ENCODE measurements at regions of chr2 and their contacts with region 1.

Region 1: DNA sequence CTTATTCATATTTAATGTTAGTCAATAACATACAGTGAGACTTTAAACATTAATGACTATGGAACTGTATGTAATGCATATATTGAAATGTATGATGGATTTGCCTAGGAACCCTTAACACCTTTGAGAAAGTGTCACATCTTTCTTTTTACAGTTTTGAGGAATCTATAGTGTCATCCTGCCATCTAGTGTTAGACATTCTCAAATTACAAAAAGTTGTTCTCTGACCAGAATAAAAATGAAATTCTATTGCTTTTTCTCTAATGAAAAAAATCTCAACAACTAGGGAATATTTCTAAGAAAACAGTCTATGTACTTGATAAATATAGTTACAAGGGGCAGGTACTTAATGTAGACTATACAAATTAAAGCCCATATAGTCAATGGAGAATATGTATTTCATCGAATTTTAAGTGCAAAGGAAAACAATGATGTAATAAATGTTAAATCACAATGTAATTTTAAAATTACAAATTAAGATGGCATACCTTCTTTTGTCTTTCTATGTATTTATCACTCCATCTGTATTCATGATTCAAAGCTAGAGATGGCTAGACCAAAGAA is 5.1 kb upstream of the CALCRL start:
- DNase-seq: no peak
- ATAC-seq: no peak
- H3K4me3 Mint-ChIP-seq: no peak overlapping the region
- H3K27ac Mint-ChIP-seq: no peak overlapping the region
- H3K4me1 Mint-ChIP-seq: peaks cover 6% of the 10 kb centered on the region
- H3K27me3 Mint-ChIP-seq: no peaks in the 10 kb centered on the region

Region 2: DNA sequence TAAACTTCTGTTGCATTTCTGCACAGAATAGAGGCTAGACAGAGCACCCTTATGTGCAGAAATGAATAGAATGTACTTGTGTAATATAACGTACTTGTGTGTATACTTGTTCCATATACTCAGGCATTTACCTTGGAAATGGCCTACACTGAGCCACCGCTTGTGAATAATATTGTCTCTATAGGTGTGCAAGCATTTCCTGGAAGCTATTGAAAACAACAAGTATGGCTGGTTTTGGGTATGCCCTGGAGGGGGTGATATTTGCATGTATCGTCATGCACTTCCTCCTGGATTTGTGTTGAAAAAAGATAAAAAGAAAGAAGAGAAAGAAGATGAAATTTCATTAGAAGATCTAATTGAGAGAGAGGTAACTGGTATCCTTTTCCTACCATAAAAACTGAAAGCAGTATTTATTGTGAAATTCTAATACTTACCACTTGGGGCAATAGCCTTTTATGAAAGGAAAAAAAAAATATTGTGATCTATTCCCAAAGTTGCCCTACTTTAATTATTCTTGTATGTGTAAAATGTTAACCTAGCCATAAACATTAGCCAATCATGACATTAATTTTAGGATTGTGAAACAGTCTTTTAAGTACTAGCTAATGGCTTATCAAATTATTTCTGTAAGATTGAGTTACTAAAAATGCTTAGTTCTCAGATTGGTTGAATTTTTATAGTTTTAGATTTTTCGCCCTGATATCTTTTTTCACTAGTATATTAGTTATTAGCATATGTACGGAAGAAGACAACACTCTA is 949.1 kb before region 1 on chr2:
- CTCF ChIA-PET with region 1: no interaction called
- POLR2A ChIA-PET with region 1: no interaction called
- intact Hi-C with region 1: loop called in 1 of 2 experiments (anchors 5 kb)
- DNase-seq: no peak
- ATAC-seq: peak; percentile 44
- H3K4me3 Mint-ChIP-seq: no peak overlapping the region
- H3K27ac Mint-ChIP-seq: no peak overlapping the region
- H3K4me1 Mint-ChIP-seq: peaks cover 10% of the 10 kb centered on the region
- H3K27me3 Mint-ChIP-seq: no peaks in the 10 kb centered on the region

Region 3: DNA sequence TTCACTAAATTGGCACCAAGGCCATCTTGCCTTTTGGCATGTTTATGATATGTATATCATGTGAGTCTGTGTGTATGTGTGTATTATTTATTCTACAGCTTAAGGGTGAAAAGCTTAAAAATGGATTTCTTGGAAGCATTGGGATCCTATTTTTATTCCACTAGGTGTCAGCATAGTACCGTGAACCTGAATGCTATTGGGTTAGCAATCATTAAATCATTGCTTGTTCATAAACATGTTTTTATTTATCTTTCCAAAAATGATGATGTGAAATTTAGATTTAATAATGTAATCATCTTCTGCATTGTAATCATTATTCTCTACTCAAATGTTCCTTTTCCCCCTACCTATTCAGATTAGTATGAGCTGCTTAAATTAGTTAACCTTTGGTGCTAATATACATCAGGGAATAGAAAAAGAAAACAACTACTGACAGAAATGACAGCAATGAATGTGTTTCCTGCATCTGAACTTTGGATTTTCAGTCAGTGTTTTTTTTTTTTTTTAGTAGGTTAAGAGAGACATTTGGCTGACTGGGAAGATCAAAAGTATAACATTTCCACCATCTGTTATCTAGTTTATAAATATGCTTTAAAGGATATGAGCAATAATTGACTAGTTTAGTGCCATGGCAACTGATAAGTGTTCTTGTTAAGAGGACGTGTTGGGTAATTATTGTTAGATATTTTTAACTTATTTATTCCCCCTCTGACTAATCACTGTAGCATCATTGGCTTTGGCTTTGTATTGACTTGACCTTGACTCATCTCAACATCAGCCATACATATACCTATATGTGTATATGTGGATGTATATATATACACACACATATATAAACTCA is 590.1 kb before region 1 on chr2:
- CTCF ChIA-PET with region 1: interaction called, 3 read pairs
- POLR2A ChIA-PET with region 1: no interaction called
- intact Hi-C with region 1: loop called (anchors 1 kb)
- DNase-seq: no peak
- ATAC-seq: no peak
- H3K4me3 Mint-ChIP-seq: no peak overlapping the region
- H3K27ac Mint-ChIP-seq: no peak overlapping the region
- H3K4me1 Mint-ChIP-seq: no peaks in the 10 kb centered on the region
- H3K27me3 Mint-ChIP-seq: no peaks in the 10 kb centered on the region

Region 4: GRCh38 chr2:186903216-186903615 is 549.9 kb before region 1 on chr2:
- CTCF ChIA-PET with region 1: no interaction called
- POLR2A ChIA-PET with region 1: no interaction called
- intact Hi-C with region 1: loop called in 1 of 2 experiments (anchors 2 kb)
- DNase-seq: no peak
- ATAC-seq: no peak
- H3K4me3 Mint-ChIP-seq: no peak overlapping the region
- H3K27ac Mint-ChIP-seq: no peak overlapping the region
- H3K4me1 Mint-ChIP-seq: no peaks in the 10 kb centered on the region
- H3K27me3 Mint-ChIP-seq: no peaks in the 10 kb centered on the region

Region 5: GRCh38 chr2:187174582-187174981 is 278.6 kb before region 1 on chr2:
- CTCF ChIA-PET with region 1: no interaction called
- POLR2A ChIA-PET with region 1: no interaction called
- intact Hi-C with region 1: loop called in 1 of 2 experiments (anchors 2 kb)
- DNase-seq: no peak
- ATAC-seq: no peak
- H3K4me3 Mint-ChIP-seq: no peak overlapping the region
- H3K27ac Mint-ChIP-seq: no peak overlapping the region
- H3K4me1 Mint-ChIP-seq: no peaks in the 10 kb centered on the region
- H3K27me3 Mint-ChIP-seq: no peaks in the 10 kb centered on the region

Region 6: DNA sequence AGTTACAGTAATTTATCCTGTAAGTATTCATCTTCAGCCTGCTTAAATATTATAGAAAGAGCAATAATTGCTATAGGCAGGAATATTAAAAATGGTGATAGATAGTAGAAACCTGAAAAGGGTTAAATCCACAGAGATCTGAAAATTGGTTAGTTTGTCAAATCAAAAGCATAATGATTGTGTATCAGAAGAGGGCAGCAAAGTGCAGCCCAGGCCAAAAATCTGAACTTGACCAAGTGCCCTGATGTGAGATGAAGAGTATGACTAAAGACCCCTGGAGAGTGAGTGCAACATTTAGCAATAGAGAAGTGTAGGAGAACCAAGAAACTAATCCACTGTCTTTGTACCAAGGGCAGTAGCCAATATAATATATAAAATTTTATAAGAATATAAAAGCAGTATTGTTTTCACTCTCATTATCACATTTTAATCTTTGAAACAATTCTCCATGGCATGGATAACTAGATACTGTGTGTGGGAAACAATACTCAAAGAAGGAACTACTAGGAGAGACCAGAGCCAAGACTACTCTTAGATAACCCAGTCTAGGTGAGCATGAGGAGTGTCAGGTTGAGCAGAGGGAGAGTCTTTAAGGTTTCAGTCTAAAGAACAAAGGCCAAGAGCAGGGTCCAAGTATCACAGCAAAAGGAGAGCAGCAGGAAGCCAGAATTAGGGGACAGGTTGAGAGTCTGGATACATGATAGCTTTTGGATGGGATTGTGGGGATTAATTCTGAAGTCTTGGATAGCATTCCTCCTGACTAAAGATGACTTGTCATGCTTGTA is 153.8 kb before region 1 on chr2:
- CTCF ChIA-PET with region 1: no interaction called
- POLR2A ChIA-PET with region 1: no interaction called
- intact Hi-C with region 1: loop called in 1 of 2 experiments (anchors 5 kb)
- DNase-seq: no peak
- ATAC-seq: no peak
- H3K4me3 Mint-ChIP-seq: no peak overlapping the region
- H3K27ac Mint-ChIP-seq: no peak overlapping the region
- H3K4me1 Mint-ChIP-seq: no peaks in the 10 kb centered on the region
- H3K27me3 Mint-ChIP-seq: no peaks in the 10 kb centered on the region

Measured in activated CD4-positive, alpha-beta T cell treated with anti-CD3 and anti-CD28 coated beads for 36 hours (primary cell).